Mammary epithelial cell (primary cell): ENCODE measurements at regions of chr1 and their contacts with region 1.

Region 1: DNA sequence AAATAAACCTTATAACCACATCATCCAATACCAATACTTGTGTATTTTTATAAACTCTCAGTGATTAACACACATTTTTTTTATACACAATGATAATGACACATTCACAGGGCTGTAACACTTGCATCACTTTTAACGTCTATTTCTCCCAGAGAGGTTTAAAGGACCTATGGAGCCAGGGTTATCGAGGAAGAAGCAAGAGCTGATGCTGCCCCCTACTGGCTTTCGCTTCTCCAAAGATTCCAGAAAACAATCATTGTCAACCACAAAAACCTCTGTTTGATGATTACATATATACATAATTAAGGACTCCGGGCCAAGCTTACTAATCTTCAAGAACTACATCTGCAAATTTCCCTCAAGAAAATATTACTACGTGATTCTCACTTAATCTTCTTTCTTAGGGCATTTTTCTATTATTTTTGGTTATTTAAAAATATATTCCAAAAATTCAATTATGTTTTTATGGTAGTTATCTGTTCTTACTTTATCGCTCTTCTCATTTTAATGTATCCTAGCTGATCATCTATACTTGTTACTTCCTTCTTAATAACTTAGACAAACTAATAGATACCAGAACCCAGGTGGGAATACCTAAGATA is 214.5 kb downstream of the VAV3 start:
- DNase-seq: peak; percentile 73
- H3K4me3 ChIP-seq: no peak overlapping the region
- H3K27ac ChIP-seq: no peak overlapping the region
- H3K4me1 ChIP-seq: no peaks in the 10 kb centered on the region
- H3K27me3 ChIP-seq: no peaks in the 10 kb centered on the region
- CTCF ChIP-seq: peak; percentile 59 to 86

Region 2: GRCh38 chr1:106022312-106022902 is 1728.1 kb before region 1 on chr1:
- CTCF ChIA-PET with region 1: no interaction called
- dilution Hi-C with region 1: no loop called
- in situ Hi-C with region 1: no loop called
- intact Hi-C with region 1: loop called (anchors 10 kb)
- DNase-seq: no peak
- H3K4me3 ChIP-seq: no peak overlapping the region
- H3K27ac ChIP-seq: no peak overlapping the region
- H3K4me1 ChIP-seq: no peaks in the 10 kb centered on the region
- H3K27me3 ChIP-seq: no peaks in the 10 kb centered on the region
- CTCF ChIP-seq: peak; percentile 28 to 38

Region 3: DNA sequence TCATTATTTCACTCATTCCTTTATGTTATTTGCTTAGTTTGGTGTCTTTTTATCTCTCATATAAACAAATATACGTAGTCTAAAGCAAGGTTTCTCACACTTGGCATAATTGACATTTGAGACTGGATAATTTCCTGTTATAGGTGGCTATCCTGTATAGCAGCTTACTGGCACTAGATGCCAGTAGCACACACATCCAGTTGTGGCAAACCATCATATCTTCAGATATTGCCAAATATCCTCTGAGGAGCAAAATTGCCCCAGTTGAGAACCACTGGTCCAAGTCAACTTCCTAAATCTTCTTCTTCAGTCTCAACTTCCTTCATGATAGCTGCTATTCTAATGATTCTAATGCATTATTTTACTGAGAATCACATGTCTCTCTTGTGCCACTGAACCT is 573.7 kb before region 1 on chr1:
- CTCF ChIA-PET with region 1: no interaction called
- dilution Hi-C with region 1: no loop called
- in situ Hi-C with region 1: no loop called
- intact Hi-C with region 1: loop called (anchors 5 kb)
- DNase-seq: no peak
- H3K4me3 ChIP-seq: no peak overlapping the region
- H3K27ac ChIP-seq: no peak overlapping the region
- H3K4me1 ChIP-seq: no peaks in the 10 kb centered on the region
- H3K27me3 ChIP-seq: no peaks in the 10 kb centered on the region
- CTCF ChIP-seq: peak in 1 of 2 donors; percentile 22

Region 4: DNA sequence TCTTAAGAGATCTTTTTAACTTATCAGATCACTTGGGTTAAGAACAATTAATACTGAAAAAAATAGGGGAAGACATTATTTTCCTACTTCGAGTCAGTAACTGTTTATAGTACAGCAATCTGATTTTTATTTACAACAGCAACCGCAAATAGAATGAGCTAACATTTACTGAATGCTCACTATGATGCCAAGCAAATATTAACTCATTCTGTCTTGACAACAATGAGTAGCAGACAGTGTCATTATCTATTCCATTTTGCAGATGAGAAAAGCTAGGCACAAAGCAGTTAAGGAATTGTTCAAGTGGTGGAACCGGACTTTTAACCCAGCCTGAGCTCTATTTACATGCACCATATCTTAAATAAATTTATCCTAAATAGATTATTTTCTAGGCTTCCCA is 335.9 kb before region 1 on chr1:
- CTCF ChIA-PET with region 1: no interaction called
- dilution Hi-C with region 1: no loop called
- in situ Hi-C with region 1: loop called in 1 of 2 experiments (anchors 10 kb)
- intact Hi-C with region 1: no loop called
- DNase-seq: no peak
- H3K4me3 ChIP-seq: no peak overlapping the region
- H3K27ac ChIP-seq: no peak overlapping the region
- H3K4me1 ChIP-seq: no peaks in the 10 kb centered on the region
- H3K27me3 ChIP-seq: no peaks in the 10 kb centered on the region
- CTCF ChIP-seq: no peak

Region 5: GRCh38 chr1:107442551-107442950 is 307.9 kb before region 1 on chr1:
- CTCF ChIA-PET with region 1: no interaction called
- dilution Hi-C with region 1: no loop called
- in situ Hi-C with region 1: loop called (anchors 10 to 25 kb)
- intact Hi-C with region 1: no loop called
- DNase-seq: no peak
- H3K4me3 ChIP-seq: no peak overlapping the region
- H3K27ac ChIP-seq: no peak overlapping the region
- H3K4me1 ChIP-seq: no peaks in the 10 kb centered on the region
- H3K27me3 ChIP-seq: no peaks in the 10 kb centered on the region
- CTCF ChIP-seq: no peak